Activated T-helper 2 cell treated with anti-CD3 and anti-CD28 coated beads, Interferon-gamma antibody, Interleukin-2, Interleukin-4, amounts not matched to agents 10 μg/mL and 5 μg/mL and 100 μg/mL, durations not matched to agents 14 hours and 24 hours and 36 hours (primary cell): ENCODE measurements at regions of chr6 and their contacts with region 1.

Region 1: DNA sequence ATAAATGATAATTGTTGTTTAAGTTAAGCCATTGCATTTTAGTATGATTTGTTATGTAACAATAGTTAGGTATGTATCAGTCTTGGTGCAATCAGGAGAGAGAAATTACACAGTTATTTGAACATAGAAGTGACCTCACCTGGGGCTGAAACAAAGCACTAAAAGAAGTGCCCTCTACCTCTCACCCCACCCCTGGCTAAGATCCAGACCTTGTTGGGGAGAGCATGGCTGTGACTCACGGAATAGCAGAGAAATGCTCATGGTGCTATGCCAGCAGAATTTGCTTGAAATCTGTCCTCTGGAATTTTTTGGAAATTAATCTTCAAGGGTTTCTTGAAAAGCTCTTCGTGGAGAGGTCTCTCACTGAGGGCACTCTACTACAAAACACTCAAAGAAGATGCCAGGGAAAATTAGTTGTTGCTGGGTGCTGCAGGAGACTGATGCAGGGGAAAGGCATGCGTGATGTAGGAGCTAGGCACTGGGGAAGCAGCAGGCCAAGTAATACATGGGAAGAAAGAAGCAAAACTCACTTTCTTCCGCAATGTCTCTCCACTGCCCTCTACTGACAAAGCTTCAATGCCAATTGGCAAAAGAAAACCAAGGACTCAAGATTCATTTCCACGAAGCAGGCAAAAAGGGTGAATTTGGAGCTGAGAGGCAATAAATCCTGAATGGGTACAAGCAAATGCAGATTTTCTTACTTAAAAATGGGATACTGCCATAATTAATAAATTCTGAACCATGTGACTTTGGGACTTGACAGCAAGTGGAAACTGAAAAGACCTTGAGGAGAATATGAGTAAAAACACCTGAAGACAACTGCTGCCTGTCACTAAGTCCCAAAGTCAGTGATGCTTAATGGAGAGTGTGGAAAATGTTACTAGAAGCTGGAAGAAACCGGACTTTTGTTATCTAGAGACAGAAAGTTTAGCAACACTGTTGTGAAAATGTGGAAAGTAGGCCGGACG is 136.3 kb upstream of the ZNF184 start:
- DNase-seq: no peak
- H3K4me3 Mint-ChIP-seq: no peak overlapping the region
- H3K27ac Mint-ChIP-seq: no peak overlapping the region
- H3K4me1 Mint-ChIP-seq: peaks cover 20% of the 10 kb centered on the region
- H3K27me3 Mint-ChIP-seq: peaks cover 36% of the 10 kb centered on the region

Region 2: DNA sequence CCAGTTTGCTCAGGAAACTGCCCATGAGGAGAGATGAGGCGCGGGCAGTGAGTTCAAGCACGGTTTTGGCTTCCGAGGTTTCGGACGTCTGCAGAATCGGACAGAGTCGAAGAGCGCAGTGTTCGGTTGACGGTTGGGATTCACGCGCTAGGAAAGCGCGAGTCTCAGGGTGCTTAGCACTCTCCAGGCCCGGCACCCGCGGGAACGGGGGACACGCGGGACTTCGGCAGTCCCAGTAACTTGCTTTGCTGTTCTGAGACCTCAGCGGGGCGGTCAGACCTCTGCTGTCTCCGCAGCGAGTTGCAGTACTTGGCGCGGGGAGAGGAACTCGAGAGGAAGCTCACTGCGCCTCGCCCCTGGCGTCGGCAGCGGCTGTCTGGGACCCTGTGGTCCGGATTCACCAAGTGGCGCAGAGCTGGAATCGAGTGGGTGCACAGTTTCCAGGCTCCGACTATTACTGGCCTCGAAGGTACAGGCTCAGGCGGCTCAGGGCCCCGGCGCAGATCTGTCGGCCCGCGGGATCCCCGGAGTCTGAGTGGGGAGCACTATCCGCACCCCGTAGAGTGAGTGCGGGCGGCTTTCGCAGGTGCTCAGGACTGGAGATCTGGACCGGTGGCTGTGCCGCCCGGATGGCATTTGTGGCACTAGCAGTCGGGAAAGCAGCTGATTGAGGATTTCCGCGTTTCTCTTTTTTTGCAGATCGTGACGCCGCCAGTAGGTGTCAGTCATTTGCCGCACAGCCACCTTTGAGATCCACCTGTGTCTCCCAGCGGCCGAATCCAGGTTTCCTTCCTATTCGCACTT is 296.9 kb before region 1 on chr6 and contains the start of gene POM121L2:
- intact Hi-C with region 1: loop called (anchors 2 kb)
- DNase-seq: peak; percentile 60
- H3K4me3 Mint-ChIP-seq: peak within 1 kb of the TSS; percentile 77
- H3K27ac Mint-ChIP-seq: no peak within 1 kb of the TSS
- H3K4me1 Mint-ChIP-seq: peaks cover 14% of the 10 kb centered on the region
- H3K27me3 Mint-ChIP-seq: peaks cover 72% of the 10 kb centered on the region
- total RNA-seq, gene POM121L2: not detected in 2 replicates

Region 3: GRCh38 chr6:27518881-27519795 is 90.1 kb before region 1 on chr6:
- intact Hi-C with region 1: loop called (anchors 2 kb)
- DNase-seq: peak; percentile 30
- H3K4me3 Mint-ChIP-seq: peak overlapping the region; percentile 79
- H3K27ac Mint-ChIP-seq: peak overlapping the region; percentile 62
- H3K4me1 Mint-ChIP-seq: peaks cover 11% of the 10 kb centered on the region
- H3K27me3 Mint-ChIP-seq: peaks cover 30% of the 10 kb centered on the region

Region 4: GRCh38 chr6:27565821-27566766 is 43.1 kb before region 1 on chr6:
- intact Hi-C with region 1: no loop called
- DNase-seq: no peak
- H3K4me3 Mint-ChIP-seq: peak overlapping the region; percentile 0
- H3K27ac Mint-ChIP-seq: no peak overlapping the region
- H3K4me1 Mint-ChIP-seq: peaks cover 6% of the 10 kb centered on the region
- H3K27me3 Mint-ChIP-seq: peaks cover 59% of the 10 kb centered on the region

Region 5: DNA sequence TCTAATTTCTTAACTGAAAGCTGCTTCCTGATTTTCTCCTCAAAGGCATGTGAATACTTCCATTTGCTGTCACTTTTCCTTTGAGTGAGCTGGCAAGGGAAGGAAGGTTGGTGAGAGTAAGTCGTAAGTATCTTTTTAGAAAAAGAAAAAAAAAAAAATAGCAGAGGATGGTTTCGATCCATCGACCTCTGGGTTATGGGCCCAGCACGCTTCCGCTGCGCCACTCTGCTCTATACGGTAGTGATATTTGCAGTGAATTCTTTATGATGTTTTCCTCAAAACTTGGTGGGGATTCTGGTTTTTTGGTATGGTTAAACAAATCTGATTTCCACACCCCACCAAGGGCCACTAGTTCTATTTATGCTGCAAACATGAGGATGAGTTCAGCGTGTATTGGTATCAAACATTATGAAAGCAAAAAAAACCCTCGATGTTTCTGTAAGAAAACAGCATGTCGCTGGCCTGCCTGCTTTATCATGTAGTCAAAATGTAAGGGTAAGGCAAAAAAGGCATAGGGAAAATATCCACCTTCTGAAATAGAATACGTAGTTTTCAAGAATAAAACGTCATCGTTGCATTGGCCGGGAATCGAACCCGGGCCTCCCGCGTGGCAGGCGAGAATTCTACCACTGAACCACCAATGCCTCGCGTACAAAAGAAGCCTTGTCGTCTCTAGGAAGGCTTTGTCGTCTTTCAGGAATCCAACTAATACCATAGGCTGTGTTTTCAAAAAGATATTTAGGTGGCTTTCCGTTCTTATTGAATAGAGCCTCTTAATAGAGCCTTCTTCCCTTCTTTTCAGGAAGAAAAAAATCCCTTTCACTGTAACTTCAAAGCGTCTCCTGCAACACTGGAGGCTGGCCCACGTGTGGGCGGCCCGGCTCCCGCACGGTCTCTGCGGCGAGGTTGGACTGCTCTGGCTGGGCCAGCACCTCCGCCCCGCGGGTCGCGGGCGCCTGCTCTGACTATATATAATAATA is 293.4 kb after region 1 on chr6:
- intact Hi-C with region 1: loop called (anchors 10 kb)
- DNase-seq: peak; percentile 78
- H3K4me3 Mint-ChIP-seq: peak overlapping the region; percentile 82
- H3K27ac Mint-ChIP-seq: peak overlapping the region; percentile 90
- H3K4me1 Mint-ChIP-seq: peaks cover 22% of the 10 kb centered on the region
- H3K27me3 Mint-ChIP-seq: peaks cover 13% of the 10 kb centered on the region